ENCODE measurements at regions of chr10 and their contacts with region 1.

Region 1: DNA sequence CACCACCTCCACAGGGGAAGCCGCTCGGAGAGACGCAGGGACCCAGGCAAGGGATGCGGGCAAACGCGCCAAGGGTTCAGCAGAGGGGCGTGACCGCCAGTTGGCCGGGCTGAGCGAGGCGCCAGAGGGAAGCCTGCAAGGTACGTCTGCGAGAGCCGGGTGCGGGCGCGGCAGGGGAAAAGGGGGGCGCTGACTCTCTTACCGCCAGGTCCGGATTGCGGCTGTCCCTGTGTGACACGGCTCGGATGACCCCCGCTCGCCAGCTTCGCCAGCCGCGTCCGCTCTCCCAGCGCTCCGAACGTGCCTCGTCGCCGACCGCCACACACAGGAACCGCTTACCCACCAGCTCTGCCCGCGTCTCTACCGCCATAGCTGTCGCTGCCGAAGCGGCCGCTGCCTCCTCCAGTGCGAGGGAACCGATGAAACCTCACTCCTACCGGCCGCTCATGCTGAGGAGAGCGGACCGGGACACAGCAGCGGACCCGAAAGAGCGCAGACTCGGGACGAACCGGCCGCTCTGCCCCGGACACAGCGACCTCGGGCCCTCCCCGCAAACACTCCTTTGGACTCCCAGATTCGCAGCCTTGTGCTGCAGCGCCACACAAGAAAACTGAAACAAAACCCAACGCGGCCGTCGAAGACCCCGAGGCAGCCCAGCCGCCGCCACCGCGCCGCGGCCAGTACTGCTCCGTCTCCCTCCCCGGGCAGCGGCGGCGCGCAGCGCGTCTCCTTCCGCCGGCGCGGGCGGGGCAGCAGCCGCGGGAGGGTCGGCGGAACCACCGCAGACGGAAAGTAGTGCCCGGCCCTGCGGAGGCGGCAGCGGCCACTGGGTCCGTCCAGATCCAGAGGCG is at the start of gene JMJD1C:
- DNase-seq: peak; percentile 90
- total RNA-seq, gene JMJD1C: 41.3 TPM

Region 2: GRCh38 chr10:63217120-63217605 is 248.4 kb before region 1 on chr10:
- intact Hi-C with region 1: loop called (anchors 10 kb)
- DNase-seq: no peak

Region 3: GRCh38 chr10:63268798-63269503 is 196.6 kb before region 1 on chr10:
- intact Hi-C with region 1: loop called (anchors 5 kb)
- DNase-seq: peak; percentile 91

Region 4: GRCh38 chr10:63438506-63439498 is 26.7 kb before region 1 on chr10:
- intact Hi-C with region 1: loop called (anchors 1 kb)
- DNase-seq: no peak

Region 5: GRCh38 chr10:63521416-63522276 is 56.1 kb after region 1 on chr10:
- intact Hi-C with region 1: loop called (anchors 2 kb)
- DNase-seq: peak; percentile 90